T-cell (primary cell): ENCODE measurements at regions of chr5 and their contacts with region 1.

Region 1: DNA sequence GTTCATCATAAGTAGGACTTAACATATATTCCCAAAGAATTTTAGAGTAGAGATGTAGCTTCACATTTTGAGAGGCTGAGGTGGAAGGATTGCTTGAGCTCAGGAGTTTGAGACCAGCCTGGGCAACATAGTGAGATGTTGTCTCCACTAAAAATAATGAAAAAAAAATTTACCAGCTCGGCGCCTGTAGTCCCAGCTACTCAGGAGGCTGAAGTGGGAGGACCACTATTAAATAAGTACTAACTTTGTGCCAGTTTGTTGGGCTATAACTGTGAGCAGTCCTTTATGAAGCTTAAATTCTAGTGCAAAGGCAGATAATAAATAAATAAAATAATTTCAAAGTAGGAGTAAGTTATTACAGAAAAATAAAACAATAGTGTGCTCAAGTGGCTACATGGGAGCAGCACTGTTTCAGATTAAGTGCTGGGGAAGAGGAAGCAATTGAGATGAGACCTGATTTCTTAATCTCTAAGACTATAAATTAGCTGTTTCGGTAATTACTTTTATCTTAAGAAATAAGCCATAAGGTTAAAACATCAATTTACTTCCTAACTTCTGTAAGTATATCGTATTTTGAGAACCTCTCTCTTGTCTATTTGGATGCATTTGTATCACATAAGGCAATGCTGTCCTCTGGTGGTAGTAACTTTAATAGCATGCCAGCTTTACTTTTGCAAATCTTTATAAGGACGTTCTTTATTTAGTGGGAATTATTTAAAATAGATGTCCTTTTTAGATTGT is 98.9 kb downstream of the CSNK1G3 start:
- DNase-seq: peak in 12 of 35 experiments; percentile 6 to 78 (median 20)
- ATAC-seq: peak in 3 of 4 experiments; percentile 53 to 73 (median 64)
- H3K4me3 ChIP-seq: no peak overlapping the region
- H3K4me3 Mint-ChIP-seq: no peak overlapping the region
- H3K27ac ChIP-seq: no peak overlapping the region
- H3K27ac Mint-ChIP-seq: peak overlapping the region; percentile 36 to 57
- H3K4me1 ChIP-seq: no peaks in the 10 kb centered on the region
- H3K4me1 Mint-ChIP-seq: peaks cover 0 to 4% (median 4%) of the 10 kb centered on the region in 3 donors
- H3K27me3 ChIP-seq: no peaks in the 10 kb centered on the region
- H3K27me3 Mint-ChIP-seq: no peaks in the 10 kb centered on the region

Region 2: GRCh38 chr5:122704243-122705036 is 906.4 kb before region 1 on chr5:
- CTCF ChIA-PET with region 1: interaction called, 10 to 14 read pairs
- POLR2A ChIA-PET with region 1: no interaction called
- DNase-seq: peak in 1 of 35 experiments; percentile 31
- ATAC-seq: no peak
- H3K4me3 ChIP-seq: no peak overlapping the region
- H3K4me3 Mint-ChIP-seq: no peak overlapping the region
- H3K27ac ChIP-seq: no peak overlapping the region
- H3K27ac Mint-ChIP-seq: no peak overlapping the region
- H3K4me1 ChIP-seq: no peaks in the 10 kb centered on the region
- H3K4me1 Mint-ChIP-seq: peaks cover 0 to 2% (median 0%) of the 10 kb centered on the region in 3 donors
- H3K27me3 ChIP-seq: no peaks in the 10 kb centered on the region
- H3K27me3 Mint-ChIP-seq: peaks cover 0 to 6% of the 10 kb centered on the region in 2 donors

Region 3: DNA sequence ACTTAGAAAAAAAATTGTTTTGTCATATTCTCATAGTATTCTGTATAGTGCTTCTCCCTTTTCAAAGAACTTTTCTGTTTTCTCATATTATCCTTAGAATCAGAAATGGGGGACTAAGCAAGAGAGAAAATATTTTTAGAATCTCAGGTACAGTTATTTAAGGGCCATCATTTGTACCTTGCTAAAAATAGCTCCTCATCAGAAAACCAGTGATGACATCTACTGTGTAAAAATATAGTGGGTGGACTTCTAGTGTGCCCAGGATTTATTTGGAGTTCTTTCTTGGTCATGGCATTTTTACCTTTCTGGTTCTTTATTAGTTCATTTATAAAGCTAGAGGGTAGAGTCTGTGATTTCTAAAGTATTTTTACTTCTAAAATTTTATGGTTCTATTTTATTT is 16.4 kb before region 1 on chr5:
- CTCF ChIA-PET with region 1: interaction called, 3 to 10 read pairs
- POLR2A ChIA-PET with region 1: no interaction called
- DNase-seq: no peak
- ATAC-seq: no peak
- H3K4me3 ChIP-seq: no peak overlapping the region
- H3K4me3 Mint-ChIP-seq: no peak overlapping the region
- H3K27ac ChIP-seq: no peak overlapping the region
- H3K27ac Mint-ChIP-seq: no peak overlapping the region
- H3K4me1 ChIP-seq: no peaks in the 10 kb centered on the region
- H3K4me1 Mint-ChIP-seq: no peaks in the 10 kb centered on the region
- H3K27me3 ChIP-seq: no peaks in the 10 kb centered on the region
- H3K27me3 Mint-ChIP-seq: no peaks in the 10 kb centered on the region